Left ventricle myocardium superior (tissue), 1 donor: ENCODE measurements at regions of chr1 and their contacts with region 1.

Region 1: DNA sequence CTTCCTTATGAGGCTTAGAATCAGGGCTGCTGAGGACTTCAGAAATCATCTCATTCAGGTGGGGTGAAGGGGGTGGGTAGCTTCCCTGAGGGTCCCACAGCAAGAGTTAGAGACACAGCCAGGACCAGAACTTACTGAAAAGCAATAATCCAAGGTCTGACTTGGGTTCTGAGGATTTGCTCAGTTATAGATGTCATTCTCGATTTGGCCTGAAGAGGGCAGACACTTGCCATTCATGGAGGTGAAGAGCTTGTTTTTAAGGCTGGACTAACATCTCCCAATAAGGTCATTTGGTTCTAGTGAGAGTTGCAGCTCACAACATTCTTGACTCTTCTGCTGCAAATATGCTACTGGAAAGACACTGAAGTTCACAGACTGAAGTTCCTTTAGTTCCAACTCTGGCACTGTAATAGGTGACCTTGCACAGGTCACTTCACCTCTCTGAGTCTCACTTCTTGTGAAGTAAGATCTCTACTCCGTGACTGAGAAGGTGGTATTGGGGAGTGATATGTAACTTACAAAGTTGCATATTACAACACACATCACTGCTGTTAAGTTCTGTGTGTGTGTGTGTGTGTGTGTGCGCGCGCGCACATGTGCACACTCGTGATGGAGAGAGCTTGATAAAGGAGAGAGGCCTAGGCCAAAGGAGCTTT is 69.8 kb upstream of the DIRAS3 start:
- DNase-seq: no peak
- ATAC-seq: peak; percentile 72

Region 2: GRCh38 chr1:67874501-67875111 is 245.7 kb before region 1 on chr1:
- intact Hi-C with region 1: no loop called
- DNase-seq: no peak
- ATAC-seq: no peak

Region 3: GRCh38 chr1:68221621-68222373 is 101.5 kb after region 1 on chr1:
- intact Hi-C with region 1: loop called (anchors 10 kb)
- DNase-seq: no peak
- ATAC-seq: no peak

Region 4: DNA sequence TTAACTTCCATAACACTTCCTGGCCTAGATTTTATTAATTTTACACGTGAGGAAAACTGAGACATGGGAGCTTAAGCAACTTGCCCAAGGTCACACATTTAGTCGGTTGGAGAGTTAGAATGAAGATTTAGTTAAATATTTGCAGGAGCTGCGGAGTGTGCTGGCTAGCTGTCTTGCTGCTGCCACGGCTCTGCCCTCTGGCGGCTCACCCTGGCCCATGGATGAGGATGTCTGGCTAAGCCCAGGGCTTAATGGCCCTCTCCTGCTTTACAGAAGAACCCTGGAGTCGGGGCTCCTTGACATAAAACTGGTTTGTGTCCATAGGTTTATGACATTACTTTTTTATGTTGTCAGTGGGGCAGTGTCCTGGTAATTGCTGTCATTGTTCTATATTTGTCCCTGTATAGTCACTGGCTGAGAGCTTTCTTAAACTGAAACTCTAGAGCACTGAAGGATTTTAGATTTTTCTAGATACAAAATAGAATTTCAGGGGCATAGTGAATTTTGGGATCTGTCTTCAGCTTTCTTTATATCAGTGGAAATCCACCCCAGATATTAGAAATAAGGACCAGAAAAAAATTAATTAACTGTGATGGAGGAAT is 200.9 kb after region 1 on chr1:
- intact Hi-C with region 1: loop called (anchors 5 kb)
- DNase-seq: peak; percentile 81
- ATAC-seq: peak; percentile 90

Region 5: GRCh38 chr1:68346188-68346808 is 226.0 kb after region 1 on chr1:
- intact Hi-C with region 1: loop called (anchors 5 kb)
- DNase-seq: no peak
- ATAC-seq: no peak